ENCODE measurements at regions of chr6 and their contacts with region 1.

Region 1: DNA sequence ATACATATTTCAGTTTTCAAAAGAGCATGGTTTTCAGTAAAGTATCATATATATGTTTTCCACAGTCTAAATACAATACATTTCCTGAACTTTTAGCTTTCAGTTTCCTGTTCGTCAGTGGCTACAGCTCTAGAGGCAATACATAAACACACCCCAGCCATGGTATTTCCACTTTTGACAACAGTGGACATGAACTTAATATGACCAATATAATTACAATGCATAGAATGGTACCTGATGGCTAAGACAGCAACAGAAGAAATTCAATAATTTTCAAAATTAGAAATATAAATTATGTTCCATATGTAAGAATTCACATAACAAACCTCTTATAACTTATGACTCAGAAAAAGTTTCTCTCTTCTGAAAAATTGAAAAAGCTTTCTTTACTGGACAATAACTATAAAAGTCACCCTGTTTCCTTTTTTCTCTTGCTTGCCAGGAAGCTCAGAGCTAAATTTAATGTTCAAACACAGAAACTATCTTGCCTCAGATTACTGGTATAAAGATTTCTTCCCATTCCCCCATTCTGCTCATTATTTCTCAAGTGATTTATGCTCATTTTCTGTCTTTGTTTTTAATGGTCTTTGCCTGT is 19.2 kb downstream of the FKBP5 start:
- DNase-seq: no peak
- H3K4me3 Mint-ChIP-seq: peak overlapping the region; percentile 57
- H3K27ac Mint-ChIP-seq: peak overlapping the region; percentile 73
- H3K4me1 Mint-ChIP-seq: peaks cover 35% of the 10 kb centered on the region
- H3K27me3 Mint-ChIP-seq: no peaks in the 10 kb centered on the region

Region 2: DNA sequence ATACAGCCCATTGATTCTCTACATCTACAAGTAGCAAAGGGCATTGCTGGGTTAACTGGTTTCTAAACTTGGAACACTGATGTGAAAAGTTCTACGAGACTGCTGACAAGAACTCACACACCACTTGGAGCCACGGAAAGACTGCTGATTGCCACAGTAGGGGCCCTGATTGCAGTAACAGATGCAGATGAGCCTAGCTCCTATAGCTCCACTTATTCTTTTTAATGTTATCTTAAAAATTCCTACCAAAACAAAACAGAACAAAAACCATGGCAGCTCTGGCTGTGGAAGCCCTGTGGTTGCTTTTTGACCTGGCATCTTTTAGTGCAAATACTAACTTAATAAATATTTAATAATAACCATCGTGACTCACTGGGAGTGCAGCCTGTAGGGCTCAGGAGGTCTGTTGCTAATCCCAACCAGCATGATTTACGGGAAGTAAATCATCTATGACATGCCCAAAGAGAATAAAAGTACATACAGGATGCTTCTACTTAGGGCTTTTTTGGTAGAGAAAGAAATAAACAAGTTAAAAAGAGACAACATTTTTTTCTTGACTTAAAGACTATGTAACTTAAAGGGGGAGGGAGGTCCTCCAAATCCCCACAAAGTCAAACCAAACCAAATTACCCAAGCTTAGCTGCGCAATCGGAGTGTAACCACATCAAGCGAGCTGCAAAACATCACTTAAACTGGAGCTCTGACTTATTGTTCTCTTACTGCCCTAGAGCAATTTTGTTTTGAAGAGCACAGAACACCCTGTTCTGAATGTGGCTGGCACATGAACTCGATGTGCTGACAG is 68.0 kb before region 1 on chr6:
- intact Hi-C with region 1: loop called (anchors 2 kb)
- DNase-seq: peak; percentile 91
- H3K4me3 Mint-ChIP-seq: peak overlapping the region; percentile 80
- H3K27ac Mint-ChIP-seq: peak overlapping the region; percentile 94
- H3K4me1 Mint-ChIP-seq: peaks cover 59% of the 10 kb centered on the region
- H3K27me3 Mint-ChIP-seq: no peaks in the 10 kb centered on the region

Region 3: GRCh38 chr6:35681298-35681697 is 11.8 kb after region 1 on chr6:
- intact Hi-C with region 1: loop called (anchors 1 kb)
- DNase-seq: peak; percentile 57
- H3K4me3 Mint-ChIP-seq: no peak overlapping the region
- H3K27ac Mint-ChIP-seq: peak overlapping the region; percentile 10
- H3K4me1 Mint-ChIP-seq: peaks cover 41% of the 10 kb centered on the region
- H3K27me3 Mint-ChIP-seq: no peaks in the 10 kb centered on the region

Region 4: GRCh38 chr6:35688581-35689322 is 19.2 kb after region 1 on chr6 and contains the start of gene FKBP5:
- intact Hi-C with region 1: loop called (anchors 2 kb)
- DNase-seq: peak; percentile 97
- H3K4me3 Mint-ChIP-seq: peak within 1 kb of the TSS; percentile 93
- H3K27ac Mint-ChIP-seq: peak within 1 kb of the TSS; percentile 92
- H3K4me1 Mint-ChIP-seq: peaks cover 15% of the 10 kb centered on the region
- H3K27me3 Mint-ChIP-seq: no peaks in the 10 kb centered on the region
- total RNA-seq, gene FKBP5: 85.0 and 85.1 TPM in 2 replicates

Region 5: GRCh38 chr6:35710241-35710847 is 40.8 kb after region 1 on chr6:
- intact Hi-C with region 1: loop called (anchors 2 kb)
- DNase-seq: peak; percentile 70
- H3K4me3 Mint-ChIP-seq: peak overlapping the region; percentile 3
- H3K27ac Mint-ChIP-seq: peak overlapping the region; percentile 60
- H3K4me1 Mint-ChIP-seq: peaks cover 29% of the 10 kb centered on the region
- H3K27me3 Mint-ChIP-seq: no peaks in the 10 kb centered on the region

Region 6: DNA sequence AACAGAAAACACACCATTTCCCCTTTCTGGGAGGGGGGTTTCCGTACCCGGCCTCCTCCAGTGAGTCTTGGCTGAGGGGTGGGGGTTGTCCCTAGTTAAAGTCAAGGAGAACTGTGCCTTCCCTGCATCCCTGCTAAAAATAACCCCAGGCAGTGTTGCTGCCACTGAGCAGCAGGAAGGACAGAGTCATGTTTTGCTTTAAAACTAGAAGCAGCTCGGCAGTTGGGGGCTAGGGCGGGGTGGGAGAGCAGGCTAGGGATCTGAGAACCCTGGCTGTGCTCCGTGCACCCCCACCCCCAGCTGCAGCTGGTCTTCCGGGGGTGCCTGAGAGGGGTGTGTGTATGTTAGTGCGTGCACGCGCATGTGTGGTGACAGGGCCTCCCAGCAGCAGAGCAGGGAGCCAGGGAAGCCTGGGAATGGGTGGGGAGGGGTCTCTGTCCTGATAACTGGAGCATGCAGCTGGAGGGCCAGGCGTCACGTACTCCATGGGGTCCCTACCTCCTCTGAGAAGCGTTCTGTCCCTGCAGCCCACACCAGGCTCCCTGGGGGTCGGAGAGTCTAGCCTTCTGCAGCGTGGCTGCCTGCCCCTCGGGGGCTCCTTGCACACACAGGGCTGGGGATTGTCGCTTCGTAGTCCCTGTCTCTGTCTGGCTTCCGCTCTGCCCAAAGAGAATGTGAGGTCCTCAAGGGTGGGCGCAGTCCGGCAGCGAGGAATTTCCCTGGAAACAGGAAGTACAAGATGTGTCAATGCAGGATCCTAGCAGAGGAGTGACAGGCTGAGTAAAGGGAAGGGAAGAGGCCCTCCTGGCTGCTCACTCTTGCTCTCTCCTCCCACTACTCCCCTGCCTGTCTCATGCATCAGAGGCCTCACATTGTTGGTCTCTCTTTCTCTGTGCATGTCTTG is 50.5 kb after region 1 on chr6:
- intact Hi-C with region 1: loop called (anchors 2 kb)
- DNase-seq: peak; percentile 69
- H3K4me3 Mint-ChIP-seq: peak overlapping the region; percentile 48
- H3K27ac Mint-ChIP-seq: peak overlapping the region; percentile 89
- H3K4me1 Mint-ChIP-seq: peaks cover 68% of the 10 kb centered on the region
- H3K27me3 Mint-ChIP-seq: no peaks in the 10 kb centered on the region

Region 7: DNA sequence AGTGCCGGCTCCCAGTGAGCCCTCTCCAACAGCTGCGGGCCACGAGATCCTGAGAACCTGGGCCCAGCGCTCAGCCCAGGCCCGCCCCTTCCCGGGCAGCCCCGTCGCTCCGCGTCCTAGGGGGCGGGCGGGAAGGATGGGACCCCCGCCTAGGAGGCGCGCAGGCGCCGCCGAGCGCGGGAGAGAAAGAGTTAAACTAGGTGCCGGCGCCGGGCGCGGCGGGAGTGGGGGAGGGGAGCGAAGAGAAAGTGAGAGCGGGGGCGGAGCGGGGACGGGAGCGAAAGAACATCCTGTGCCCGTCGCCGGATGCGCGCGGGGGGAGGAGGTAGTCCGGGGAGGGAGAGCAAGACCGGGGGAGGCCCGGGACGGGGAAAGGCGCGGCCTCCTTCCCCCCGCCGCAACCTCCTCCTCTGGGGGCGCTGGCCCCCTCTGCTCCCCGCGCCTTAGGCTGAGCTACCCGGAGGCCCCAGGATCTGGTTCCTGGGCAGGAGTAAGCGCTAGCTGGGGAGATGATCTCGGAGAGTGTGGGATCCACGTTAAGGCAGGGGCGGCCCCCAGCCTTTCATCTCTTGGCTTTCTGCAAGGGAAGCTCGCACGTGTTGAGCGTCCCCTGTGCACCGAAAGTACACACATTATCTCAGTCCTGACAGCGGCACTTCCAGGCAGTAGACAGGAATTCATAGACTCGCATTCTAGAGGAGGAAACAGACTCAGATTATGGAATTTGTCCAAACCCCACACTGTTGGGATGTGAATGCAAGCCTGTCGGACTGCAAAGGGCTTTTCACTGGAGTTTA is 62.4 kb after region 1 on chr6:
- intact Hi-C with region 1: loop called (anchors 1 kb)
- DNase-seq: peak; percentile 98
- H3K4me3 Mint-ChIP-seq: peak overlapping the region; percentile 90
- H3K27ac Mint-ChIP-seq: peak overlapping the region; percentile 94
- H3K4me1 Mint-ChIP-seq: peaks cover 56% of the 10 kb centered on the region
- H3K27me3 Mint-ChIP-seq: no peaks in the 10 kb centered on the region